H1 (cell line): ENCODE measurements at regions of chr3 and their contacts with region 1.

Region 1: DNA sequence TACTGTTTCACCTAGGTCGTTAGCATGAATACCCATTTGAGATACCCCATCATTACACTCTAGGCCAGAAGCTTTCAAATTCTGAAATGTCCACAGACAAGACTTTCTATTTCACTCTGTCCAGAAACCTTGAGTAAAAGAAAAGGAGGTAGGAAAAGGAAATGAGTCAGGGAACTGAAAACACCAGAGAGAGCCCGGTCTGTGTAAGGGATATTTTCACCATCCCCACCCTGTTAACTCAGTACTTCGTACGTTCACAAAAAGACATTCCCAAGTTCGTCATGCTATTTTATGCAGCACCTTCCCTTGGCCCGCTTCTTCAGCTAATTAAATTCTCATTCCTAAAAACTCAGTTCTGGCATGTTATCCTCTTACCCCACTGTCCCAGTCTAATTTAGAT is 89.4 kb upstream of the SOX2 start:
- DNase-seq: no peak
- H3K4me3 ChIP-seq: no peak overlapping the region
- H3K27ac ChIP-seq: no peak overlapping the region
- H3K4me1 ChIP-seq: no peaks in the 10 kb centered on the region; a peak in 1 of 7 replicates
- H3K27me3 ChIP-seq: no peaks in the 10 kb centered on the region
- CTCF ChIP-seq: no peak
- EP300 ChIP-seq: no peak
- POLR2A ChIP-seq: no peak
- RAD21 ChIP-seq: no peak

Region 2: DNA sequence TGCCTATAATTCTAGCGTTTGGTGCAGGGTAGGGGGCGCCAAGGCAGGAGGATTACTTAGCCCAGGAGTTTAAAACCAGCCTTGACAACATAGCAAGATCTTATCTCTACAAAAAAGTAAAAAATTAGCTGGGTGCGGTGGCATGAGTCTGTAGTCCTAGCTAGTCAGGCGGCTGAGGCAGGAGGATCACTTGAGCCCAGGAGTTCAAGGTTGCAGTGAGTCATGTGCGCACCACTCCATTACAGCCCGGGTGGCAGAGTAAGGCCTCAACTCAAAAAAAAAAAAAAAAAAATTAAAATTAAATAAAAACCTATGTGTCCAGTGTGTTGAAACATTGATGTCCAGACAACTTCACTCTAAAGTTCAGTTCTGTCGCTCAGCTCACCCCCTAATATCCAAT is 11.2 kb after region 1 on chr3:
- CTCF ChIA-PET with region 1: interaction called, 15 read pairs
- POLR2A ChIA-PET with region 1: no interaction called
- DNase-seq: no peak
- H3K4me3 ChIP-seq: no peak overlapping the region
- H3K27ac ChIP-seq: no peak overlapping the region
- H3K4me1 ChIP-seq: no peaks in the 10 kb centered on the region
- H3K27me3 ChIP-seq: no peaks in the 10 kb centered on the region
- CTCF ChIP-seq: peak in 1 of 3 experiments; percentile 11; a peak in 1 of 4 replicates
- EP300 ChIP-seq: no peak
- POLR2A ChIP-seq: no peak
- RAD21 ChIP-seq: peak in 1 of 2 experiments; percentile 16; a peak in 1 of 4 replicates